ENCODE measurements at regions of chr13 and their contacts with region 1.

Region 1: DNA sequence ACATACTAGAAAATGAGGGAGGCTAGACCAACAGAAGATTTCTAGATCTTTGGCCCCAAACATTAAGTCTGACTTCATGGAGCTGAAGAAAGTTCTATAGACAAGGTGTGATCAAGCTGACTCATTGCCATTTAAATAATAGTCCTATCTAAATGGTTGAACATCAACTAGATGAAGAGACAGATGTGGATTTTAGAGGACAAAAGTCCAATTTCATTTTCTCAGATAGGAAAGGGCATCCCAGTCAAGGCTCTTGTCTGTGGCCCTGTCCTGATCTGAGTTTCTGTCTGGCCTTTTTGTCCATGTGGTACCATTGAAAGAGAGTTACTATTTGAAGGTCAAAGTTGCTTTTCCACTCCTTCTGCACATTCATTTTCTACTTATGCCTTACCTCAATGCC is 74.6 kb downstream of the MBNL2 start:
- DNase-seq: no peak
- H3K4me3 ChIP-seq: no peak overlapping the region
- H3K27ac ChIP-seq: peak overlapping the region; percentile 2; the same call in 1 of the 2 replicates
- H3K4me1 ChIP-seq: peaks cover 30% of the 10 kb centered on the region
- H3K27me3 ChIP-seq: no peaks in the 10 kb centered on the region
- CTCF ChIP-seq: no peak

Region 2: GRCh38 chr13:97011446-97012131 is 285.2 kb before region 1 on chr13:
- CTCF ChIA-PET with region 1: interaction called, 10 read pairs
- POLR2A ChIA-PET with region 1: no interaction called
- intact Hi-C with region 1: no loop called
- DNase-seq: no peak
- H3K4me3 ChIP-seq: no peak overlapping the region
- H3K27ac ChIP-seq: no peak overlapping the region
- H3K4me1 ChIP-seq: no peaks in the 10 kb centered on the region
- H3K27me3 ChIP-seq: no peaks in the 10 kb centered on the region
- CTCF ChIP-seq: no peak